ENCODE measurements at regions of chr10 and their contacts with region 1.

Region 1: GRCh38 chr10:104254493-104255310 is at the start of gene GSTO1:
- DNase-seq: peak; percentile 77 to 79
- ATAC-seq: peak; percentile 89 to 95
- H3K4me3 ChIP-seq: peak within 1 kb of the TSS; percentile 99
- H3K27ac ChIP-seq: peak within 1 kb of the TSS; percentile 98 to 99
- H3K4me1 ChIP-seq: peaks cover 25% of the 10 kb centered on the region
- CTCF ChIP-seq: no peak
- EP300 ChIP-seq: no peak
- POLR2A ChIP-seq: peak; percentile 90
- RAD21 ChIP-seq: 0 out of 5 replicates have a peak, but pooled peaks of 1 of the 2 experiments have one; percentile 9
- polyA plus RNA-seq, gene GSTO1: 172 and 204 TPM in 2 replicates

Region 2: DNA sequence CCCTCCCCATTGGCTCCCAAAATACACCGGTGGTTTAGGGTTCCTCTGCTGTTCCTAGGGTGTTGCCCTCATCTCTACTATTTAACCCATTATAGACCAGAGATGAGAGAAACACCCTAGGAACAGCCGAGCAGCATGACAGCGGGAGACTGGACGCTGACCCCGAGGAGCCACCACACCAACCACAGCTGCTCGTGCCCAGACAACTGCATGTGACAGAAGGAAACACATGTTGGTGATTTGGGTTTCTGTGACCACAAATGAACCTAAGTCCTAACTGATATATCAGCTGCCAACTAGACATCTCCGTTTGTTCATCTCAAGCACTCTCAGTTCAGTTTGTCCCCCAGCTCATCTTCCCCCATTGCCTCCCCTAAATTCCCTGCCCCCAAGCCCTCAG is 36.0 kb before region 1 on chr10:
- CTCF ChIA-PET with region 1: no interaction called
- POLR2A ChIA-PET with region 1: no interaction called
- DNase-seq: no peak
- ATAC-seq: no peak
- H3K4me3 ChIP-seq: no peak overlapping the region
- H3K27ac ChIP-seq: no peak overlapping the region
- H3K4me1 ChIP-seq: no peaks in the 10 kb centered on the region
- CTCF ChIP-seq: no peak
- EP300 ChIP-seq: no peak
- POLR2A ChIP-seq: no peak
- RAD21 ChIP-seq: no peak

Region 3: GRCh38 chr10:104268716-104269645 is 14.3 kb after region 1 on chr10 and contains the start of gene GSTO2:
- CTCF ChIA-PET with region 1: interaction called, 11 read pairs
- POLR2A ChIA-PET with region 1: interaction called, 27 read pairs
- DNase-seq: peak; percentile 99 to 100
- ATAC-seq: peak; percentile 99 to 100
- H3K4me3 ChIP-seq: peak within 1 kb of the TSS; percentile 68
- H3K27ac ChIP-seq: peak within 1 kb of the TSS; percentile 83 to 91
- H3K4me1 ChIP-seq: peaks cover 13% of the 10 kb centered on the region; the same call in 2 of the 3 replicates
- CTCF ChIP-seq: no peak
- EP300 ChIP-seq: no peak
- POLR2A ChIP-seq: peak; percentile 83
- RAD21 ChIP-seq: no peak
- polyA plus RNA-seq, gene GSTO2: 5.7 and 6.3 TPM in 2 replicates